HEK293 (cell line): ENCODE measurements at regions of chr6 and their contacts with region 1.

Region 1: GRCh38 chr6:142155895-142156757 is 9.1 kb downstream of the VTA1 start:
- H3K4me3 ChIP-seq: no peak overlapping the region
- H3K27ac ChIP-seq: no peak overlapping the region
- H3K4me1 ChIP-seq: peaks cover 9% of the 10 kb centered on the region; the same call in 1 of the 2 replicates
- CTCF ChIP-seq: no peak

Region 2: GRCh38 chr6:142058551-142059290 is 97.4 kb before region 1 on chr6:
- CTCF ChIA-PET with region 1: no interaction called
- POLR2A ChIA-PET with region 1: no interaction called
- H3K4me3 ChIP-seq: no peak overlapping the region
- H3K27ac ChIP-seq: no peak overlapping the region
- H3K4me1 ChIP-seq: no peaks in the 10 kb centered on the region
- CTCF ChIP-seq: no peak

Region 3: GRCh38 chr6:142167486-142167885 is 11.4 kb after region 1 on chr6:
- CTCF ChIA-PET with region 1: interaction called, 33 read pairs
- POLR2A ChIA-PET with region 1: interaction called, 3 read pairs
- H3K4me3 ChIP-seq: no peak overlapping the region
- H3K27ac ChIP-seq: no peak overlapping the region
- H3K4me1 ChIP-seq: peaks cover 14% of the 10 kb centered on the region
- CTCF ChIP-seq: no peak

Region 4: DNA sequence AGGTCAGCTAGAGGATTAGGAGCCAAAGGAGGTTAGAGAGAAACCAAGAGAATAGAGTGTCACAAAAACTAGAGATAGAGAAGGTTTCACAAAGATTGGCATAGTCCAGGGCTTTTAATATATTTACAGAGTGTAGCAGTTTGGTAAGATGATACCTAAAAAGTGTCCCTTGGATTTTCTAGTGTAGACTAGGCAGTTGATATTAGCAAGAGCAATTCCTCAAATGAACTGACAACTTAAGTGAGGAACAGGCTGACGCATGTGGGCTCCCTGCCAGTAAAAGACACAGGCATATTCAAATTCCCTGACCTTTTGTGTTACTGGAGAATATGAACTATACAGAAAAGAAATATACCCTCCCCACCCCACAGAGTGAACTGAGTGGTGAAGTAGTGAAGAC is 31.1 kb after region 1 on chr6:
- CTCF ChIA-PET with region 1: interaction called, 37 read pairs
- POLR2A ChIA-PET with region 1: no interaction called
- H3K4me3 ChIP-seq: no peak overlapping the region
- H3K27ac ChIP-seq: no peak overlapping the region
- H3K4me1 ChIP-seq: peaks cover 13% of the 10 kb centered on the region
- CTCF ChIP-seq: no peak

Region 5: GRCh38 chr6:142207265-142207877 is 51.2 kb after region 1 on chr6:
- CTCF ChIA-PET with region 1: interaction called, 67 read pairs
- POLR2A ChIA-PET with region 1: no interaction called
- H3K4me3 ChIP-seq: no peak overlapping the region
- H3K27ac ChIP-seq: no peak overlapping the region
- H3K4me1 ChIP-seq: no peaks in the 10 kb centered on the region
- CTCF ChIP-seq: peak; percentile 59

Region 6: DNA sequence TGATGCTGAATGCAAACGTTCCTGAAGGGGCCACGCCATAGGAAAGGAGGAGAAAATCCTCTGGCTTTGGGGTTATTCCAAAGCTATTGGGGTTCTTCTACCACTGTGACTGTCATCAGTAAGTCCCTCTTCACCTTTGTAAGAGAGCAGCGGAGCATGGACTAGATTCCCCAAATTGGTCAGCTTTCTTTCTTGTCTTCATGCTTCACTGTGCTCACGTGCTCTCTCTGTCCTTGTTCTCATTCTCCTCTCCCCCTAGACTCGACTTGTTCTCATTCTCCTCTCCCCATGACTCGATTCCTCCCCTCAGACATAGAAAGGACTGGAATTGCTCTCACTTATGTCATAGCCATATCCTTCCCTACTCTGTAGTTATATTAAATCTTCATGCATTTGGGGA is 90.8 kb after region 1 on chr6:
- CTCF ChIA-PET with region 1: no interaction called
- POLR2A ChIA-PET with region 1: no interaction called
- H3K4me3 ChIP-seq: no peak overlapping the region
- H3K27ac ChIP-seq: no peak overlapping the region
- H3K4me1 ChIP-seq: no peaks in the 10 kb centered on the region
- CTCF ChIP-seq: no peak

Region 7: GRCh38 chr6:142378138-142378875 is 222.2 kb after region 1 on chr6:
- CTCF ChIA-PET with region 1: interaction called, 10 read pairs
- POLR2A ChIA-PET with region 1: no interaction called
- H3K4me3 ChIP-seq: no peak overlapping the region; the same call in 1 of the 2 replicates
- H3K27ac ChIP-seq: peak overlapping the region; percentile 18; the same call in 1 of the 2 replicates
- H3K4me1 ChIP-seq: peaks cover 38% of the 10 kb centered on the region
- CTCF ChIP-seq: no peak